Common myeloid progenitor, CD34-positive (primary cell): ENCODE measurements at regions of chr3 and their contacts with region 1.

Region 1: GRCh38 chr3:72310419-72311380 is 525.8 kb upstream of the PROK2 start:
- DNase-seq: peak; percentile 88 to 98 (median 97)
- H3K4me3 ChIP-seq: peak overlapping the region in 4 of 7 experiments; percentile 12 to 53 (median 47)
- H3K27ac ChIP-seq: peak overlapping the region; percentile 79 to 84
- H3K4me1 ChIP-seq: peaks cover 20 to 65% (median 61%) of the 10 kb centered on the region in 4 experiments
- H3K27me3 ChIP-seq: no peaks in the 10 kb centered on the region

Region 2: DNA sequence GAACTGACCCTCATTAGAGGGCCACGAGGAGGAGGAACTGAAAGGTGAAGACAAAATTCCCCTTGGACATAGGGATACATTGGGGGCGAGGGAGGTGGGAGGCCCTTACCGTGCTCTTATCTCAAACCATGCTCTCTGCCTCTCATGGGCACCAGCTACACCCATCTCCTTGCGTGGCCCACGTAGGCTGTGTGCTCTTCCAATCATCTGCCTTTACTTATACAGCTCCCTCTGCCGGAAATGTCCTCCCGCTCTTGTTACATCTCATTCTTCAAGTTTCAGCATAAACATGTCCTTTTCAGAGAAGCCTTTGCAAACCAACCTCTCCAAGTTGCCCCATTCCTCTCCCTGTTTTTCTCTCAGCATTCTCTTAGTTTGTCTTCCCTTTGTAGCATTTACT is 217.9 kb before region 1 on chr3:
- CTCF ChIA-PET with region 1: no interaction called
- POLR2A ChIA-PET with region 1: no interaction called
- DNase-seq: no peak
- H3K4me3 ChIP-seq: no peak overlapping the region
- H3K27ac ChIP-seq: no peak overlapping the region
- H3K4me1 ChIP-seq: peaks cover 0 to 6% (median 3%) of the 10 kb centered on the region in 4 experiments
- H3K27me3 ChIP-seq: no peaks in the 10 kb centered on the region

Region 3: GRCh38 chr3:72288955-72289691 is 21.6 kb before region 1 on chr3:
- CTCF ChIA-PET with region 1: interaction called, 13 read pairs
- POLR2A ChIA-PET with region 1: interaction called, 10 read pairs
- DNase-seq: peak; percentile 93 to 99 (median 96)
- H3K4me3 ChIP-seq: peak overlapping the region in 6 of 7 experiments; percentile 6 to 55 (median 49)
- H3K27ac ChIP-seq: peak overlapping the region; percentile 30 to 73
- H3K4me1 ChIP-seq: peaks cover 4 to 41% (median 38%) of the 10 kb centered on the region in 4 experiments
- H3K27me3 ChIP-seq: no peaks in the 10 kb centered on the region

Region 4: DNA sequence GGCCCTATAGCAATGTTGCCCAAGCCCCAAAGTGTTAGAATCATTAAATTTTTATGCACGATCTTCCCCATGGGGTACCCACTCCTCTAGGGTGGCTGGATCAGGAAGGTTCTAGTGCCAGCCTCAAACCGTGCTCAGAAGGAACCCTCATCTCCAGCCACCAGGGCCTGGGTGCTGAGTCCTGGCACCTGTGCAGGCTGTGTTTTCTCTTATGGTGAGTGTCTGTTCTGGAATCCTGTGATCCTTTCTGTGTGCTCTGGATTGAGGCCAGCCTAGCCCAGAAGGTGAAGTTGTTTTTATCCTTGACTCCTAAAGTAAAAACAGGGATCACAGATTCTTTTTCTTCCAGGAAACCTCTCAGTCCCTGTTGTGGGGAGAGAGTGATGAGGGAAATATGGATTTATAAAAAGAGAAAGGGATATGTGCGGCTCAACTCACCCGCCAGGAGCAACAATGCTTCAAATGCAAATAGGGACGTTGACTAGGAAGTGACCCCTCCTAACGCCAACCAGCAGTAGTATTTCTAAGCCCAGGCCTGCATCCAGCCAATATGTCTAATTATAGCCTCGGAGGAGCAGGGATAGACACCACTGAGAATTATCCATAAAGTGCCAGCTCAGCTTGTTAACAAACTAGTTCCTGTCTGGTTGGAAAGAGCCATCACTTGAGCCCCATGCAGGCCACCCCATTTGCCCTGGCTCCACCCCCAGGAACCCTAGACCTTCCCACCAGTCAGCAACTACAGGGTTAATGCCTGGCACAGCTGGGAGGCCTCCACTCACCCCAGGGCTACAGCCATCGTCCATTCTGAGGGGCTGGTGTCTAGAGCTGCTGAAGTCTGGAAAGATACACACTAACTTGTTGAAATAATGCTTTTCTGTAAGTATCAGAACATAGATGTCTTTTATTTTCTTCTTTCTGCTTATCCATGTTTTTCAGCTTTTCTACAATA is 12.2 kb before region 1 on chr3:
- CTCF ChIA-PET with region 1: interaction called, 19 read pairs
- POLR2A ChIA-PET with region 1: interaction called, 3 read pairs
- DNase-seq: no peak
- H3K4me3 ChIP-seq: no peak overlapping the region
- H3K27ac ChIP-seq: no peak overlapping the region
- H3K4me1 ChIP-seq: peaks cover 0 to 18% (median 7%) of the 10 kb centered on the region in 4 experiments
- H3K27me3 ChIP-seq: no peaks in the 10 kb centered on the region

Region 5: GRCh38 chr3:72347819-72348319 is 37.2 kb after region 1 on chr3:
- CTCF ChIA-PET with region 1: interaction called, 3 read pairs
- POLR2A ChIA-PET with region 1: interaction called, 24 read pairs
- DNase-seq: peak; percentile 94 to 99 (median 98)
- H3K4me3 ChIP-seq: peak overlapping the region in 3 of 7 experiments; percentile 26 to 36 (median 31)
- H3K27ac ChIP-seq: peak overlapping the region; percentile 25 to 83
- H3K4me1 ChIP-seq: peaks cover 21 to 75% (median 63%) of the 10 kb centered on the region in 4 experiments
- H3K27me3 ChIP-seq: no peaks in the 10 kb centered on the region